Activated CD4-positive, alpha-beta T cell treated with anti-CD3 and anti-CD28 coated beads for 36 hours (primary cell): ENCODE measurements at regions of chr16 and their contacts with region 1.

Region 1: GRCh38 chr16:10888320-10888937 is 11.4 kb downstream of the CIITA start:
- DNase-seq: no peak
- ATAC-seq: no peak
- H3K4me3 Mint-ChIP-seq: no peak overlapping the region
- H3K27ac Mint-ChIP-seq: no peak overlapping the region
- H3K4me1 Mint-ChIP-seq: peaks cover 4% of the 10 kb centered on the region
- H3K27me3 Mint-ChIP-seq: peaks cover 30% of the 10 kb centered on the region

Region 2: DNA sequence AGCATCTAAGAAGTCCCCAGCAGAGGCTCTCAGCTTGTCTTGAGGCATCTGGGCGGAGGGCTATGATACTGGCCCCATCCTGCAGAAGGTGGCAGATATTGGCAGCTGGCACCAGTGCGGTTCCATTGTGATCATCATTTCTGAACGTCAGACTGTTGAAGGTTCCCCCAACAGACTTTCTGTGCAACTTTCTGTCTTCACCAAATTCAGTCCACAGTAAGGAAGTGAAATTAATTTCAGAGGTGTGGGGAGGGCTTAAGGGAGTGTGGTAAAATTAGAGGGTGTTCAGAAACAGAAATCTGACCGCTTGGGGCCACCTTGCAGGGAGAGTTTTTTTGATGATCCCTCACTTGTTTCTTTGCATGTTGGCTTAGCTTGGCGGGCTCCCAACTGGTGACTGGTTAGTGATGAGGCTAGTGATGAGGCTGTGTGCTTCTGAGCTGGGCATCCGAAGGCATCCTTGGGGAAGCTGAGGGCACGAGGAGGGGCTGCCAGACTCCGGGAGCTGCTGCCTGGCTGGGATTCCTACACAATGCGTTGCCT is 11.6 kb before region 1 on chr16 and contains the start of gene CIITA:
- CTCF ChIA-PET with region 1: interaction called, 11 read pairs
- POLR2A ChIA-PET with region 1: no interaction called
- intact Hi-C with region 1: no loop called
- DNase-seq: peak; percentile 77
- ATAC-seq: peak; percentile 50
- H3K4me3 Mint-ChIP-seq: peak within 1 kb of the TSS; percentile 70
- H3K27ac Mint-ChIP-seq: no peak within 1 kb of the TSS
- H3K4me1 Mint-ChIP-seq: peaks cover 62% of the 10 kb centered on the region
- H3K27me3 Mint-ChIP-seq: peaks cover 71% of the 10 kb centered on the region
- total RNA-seq, gene CIITA: 0.87 to 1.4 TPM